ENCODE measurements at regions of chr6 and their contacts with region 1.

Region 1: GRCh38 chr6:89829591-89830385 is at the start of gene CASP8AP2:
- DNase-seq: peak; percentile 98
- ATAC-seq: peak; percentile 93
- H3K4me3 ChIP-seq: peak within 1 kb of the TSS; percentile 75 to 97 (median 79)
- H3K4me3 Mint-ChIP-seq: peak within 1 kb of the TSS; percentile 99
- H3K27ac ChIP-seq: peak within 1 kb of the TSS; percentile 62 to 83
- H3K27ac Mint-ChIP-seq: peak within 1 kb of the TSS; percentile 95
- H3K4me1 ChIP-seq: peaks cover 14 to 28% of the 10 kb centered on the region in 2 donors
- H3K4me1 Mint-ChIP-seq: peaks cover 29% of the 10 kb centered on the region
- H3K27me3 ChIP-seq: no peaks in the 10 kb centered on the region
- H3K27me3 Mint-ChIP-seq: no peaks in the 10 kb centered on the region
- CTCF ChIP-seq: no peak
- total RNA-seq, gene CASP8AP2: 30.6 and 32.1 TPM in 2 replicates

Region 2: GRCh38 chr6:89080542-89081422 is 749.0 kb before region 1 on chr6 and contains the start of gene PNRC1:
- CTCF ChIA-PET with region 1: no interaction called
- POLR2A ChIA-PET with region 1: no interaction called
- intact Hi-C with region 1: loop called (anchors 2 kb)
- DNase-seq: peak; percentile 100
- ATAC-seq: peak; percentile 76
- H3K4me3 ChIP-seq: peak within 1 kb of the TSS; percentile 81 to 100 (median 98)
- H3K4me3 Mint-ChIP-seq: peak within 1 kb of the TSS; percentile 99
- H3K27ac ChIP-seq: peak within 1 kb of the TSS; percentile 99
- H3K27ac Mint-ChIP-seq: peak within 1 kb of the TSS; percentile 98
- H3K4me1 ChIP-seq: peaks cover 25 to 29% of the 10 kb centered on the region in 2 donors
- H3K4me1 Mint-ChIP-seq: peaks cover 38% of the 10 kb centered on the region
- H3K27me3 ChIP-seq: no peaks in the 10 kb centered on the region
- H3K27me3 Mint-ChIP-seq: no peaks in the 10 kb centered on the region
- CTCF ChIP-seq: no peak
- total RNA-seq, gene PNRC1: 460 and 486 TPM in 2 replicates

Region 3: DNA sequence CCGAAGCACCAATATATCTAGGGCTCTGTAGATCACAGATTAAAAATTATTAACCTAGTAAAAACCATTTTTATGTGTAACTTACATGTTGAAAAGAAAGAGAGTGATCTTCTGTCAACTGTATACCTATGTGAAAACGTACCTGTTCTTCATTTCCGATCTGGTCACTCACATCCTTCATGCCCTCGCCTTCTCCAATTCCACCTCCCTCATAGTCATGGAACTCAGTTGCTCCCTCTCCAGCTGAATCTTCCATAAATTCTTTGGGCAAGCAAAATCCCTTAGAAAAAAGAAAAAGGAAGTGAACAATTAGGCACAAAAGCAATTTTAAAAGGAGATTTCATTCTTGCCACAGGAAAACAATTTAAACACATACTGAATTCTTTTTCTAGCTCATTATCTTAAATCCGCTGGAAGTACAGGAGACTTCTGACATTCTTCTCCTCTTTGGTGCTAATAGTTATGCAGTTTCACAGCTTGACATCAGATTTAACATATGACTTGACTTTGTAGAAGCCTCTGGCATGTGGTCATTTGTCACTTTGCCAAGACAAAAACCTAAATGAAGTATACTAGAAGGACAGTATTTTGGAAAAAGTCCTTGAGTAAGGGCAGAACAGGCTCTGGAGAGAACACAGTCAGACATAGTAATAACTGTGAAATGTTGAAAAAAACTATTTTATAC is 161.8 kb before region 1 on chr6:
- CTCF ChIA-PET with region 1: no interaction called
- POLR2A ChIA-PET with region 1: no interaction called
- intact Hi-C with region 1: no loop called
- DNase-seq: no peak
- ATAC-seq: no peak
- H3K4me3 ChIP-seq: no peak overlapping the region
- H3K4me3 Mint-ChIP-seq: no peak overlapping the region
- H3K27ac ChIP-seq: no peak overlapping the region
- H3K27ac Mint-ChIP-seq: no peak overlapping the region
- H3K4me1 ChIP-seq: no peaks in the 10 kb centered on the region
- H3K4me1 Mint-ChIP-seq: no peaks in the 10 kb centered on the region
- H3K27me3 ChIP-seq: no peaks in the 10 kb centered on the region
- H3K27me3 Mint-ChIP-seq: no peaks in the 10 kb centered on the region
- CTCF ChIP-seq: no peak

Region 4: DNA sequence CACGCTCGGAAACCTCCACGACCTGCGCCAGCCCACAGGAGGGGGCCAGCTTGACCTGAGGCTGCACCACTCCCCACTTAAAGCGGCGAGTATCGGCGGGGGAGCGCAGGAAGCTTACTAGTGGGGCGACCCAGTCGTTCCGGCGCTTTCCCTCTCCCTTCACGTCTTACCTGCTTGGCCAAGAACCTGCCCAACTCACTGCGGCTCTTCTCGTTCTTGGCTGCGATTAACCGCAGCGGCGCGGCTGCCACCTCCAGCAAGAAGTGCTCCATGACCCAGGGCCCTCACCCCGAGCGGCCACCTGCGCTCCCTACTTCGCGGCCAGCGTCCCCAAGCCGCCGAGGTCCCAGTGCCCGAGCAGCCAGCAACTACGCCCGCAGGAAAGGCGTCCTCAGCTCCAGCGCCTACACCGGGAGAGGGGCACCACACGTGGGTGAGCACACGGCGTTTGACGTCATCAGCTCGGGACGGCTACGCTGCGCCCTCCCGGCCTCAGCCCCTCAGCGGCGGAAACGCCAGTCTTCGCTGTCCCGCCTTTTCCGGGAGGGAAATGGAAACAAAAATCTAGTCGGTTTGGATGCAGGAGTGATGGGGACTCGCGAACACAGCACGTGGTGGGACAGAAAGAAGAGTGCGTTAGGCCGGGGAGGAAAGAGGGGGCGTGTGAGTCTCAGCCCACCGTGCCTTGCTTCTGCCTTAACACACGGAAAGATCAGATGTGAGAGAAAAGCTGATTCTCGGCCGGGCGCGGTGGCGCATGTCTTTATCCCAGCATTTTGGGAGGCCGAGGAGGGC is 10.3 kb before region 1 on chr6 and contains the start of gene MDN1:
- CTCF ChIA-PET with region 1: interaction called, 22 read pairs
- POLR2A ChIA-PET with region 1: interaction called, 34 read pairs
- intact Hi-C with region 1: loop called (anchors 1 kb)
- DNase-seq: peak; percentile 93
- ATAC-seq: peak; percentile 91
- H3K4me3 ChIP-seq: peak within 1 kb of the TSS; percentile 41 to 99 (median 89)
- H3K4me3 Mint-ChIP-seq: peak within 1 kb of the TSS; percentile 98
- H3K27ac ChIP-seq: peak within 1 kb of the TSS; percentile 80 to 85
- H3K27ac Mint-ChIP-seq: peak within 1 kb of the TSS; percentile 96
- H3K4me1 ChIP-seq: peaks cover 24 to 32% of the 10 kb centered on the region in 2 donors
- H3K4me1 Mint-ChIP-seq: peaks cover 29% of the 10 kb centered on the region
- H3K27me3 ChIP-seq: no peaks in the 10 kb centered on the region
- H3K27me3 Mint-ChIP-seq: no peaks in the 10 kb centered on the region
- CTCF ChIP-seq: no peak
- total RNA-seq, gene MDN1: 59.5 and 66.6 TPM in 2 replicates

Region 5: GRCh38 chr6:90080876-90081481 is 251.2 kb after region 1 on chr6:
- CTCF ChIA-PET with region 1: no interaction called
- POLR2A ChIA-PET with region 1: no interaction called
- intact Hi-C with region 1: loop called (anchors 5 kb)
- DNase-seq: peak; percentile 54
- ATAC-seq: peak; percentile 48
- H3K4me3 ChIP-seq: peak overlapping the region in 4 of 5 experiments; percentile 11 to 48 (median 40)
- H3K4me3 Mint-ChIP-seq: peak overlapping the region; percentile 90
- H3K27ac ChIP-seq: peak overlapping the region; percentile 4 to 52
- H3K27ac Mint-ChIP-seq: peak overlapping the region; percentile 90
- H3K4me1 ChIP-seq: peaks cover 61 to 72% of the 10 kb centered on the region in 2 donors
- H3K4me1 Mint-ChIP-seq: peaks cover 92% of the 10 kb centered on the region
- H3K27me3 ChIP-seq: no peaks in the 10 kb centered on the region
- H3K27me3 Mint-ChIP-seq: no peaks in the 10 kb centered on the region
- CTCF ChIP-seq: no peak

Region 6: GRCh38 chr6:90296346-90297114 is 466.7 kb after region 1 on chr6 and contains the start of gene BACH2:
- CTCF ChIA-PET with region 1: no interaction called
- POLR2A ChIA-PET with region 1: no interaction called
- intact Hi-C with region 1: loop called (anchors 10 kb)
- DNase-seq: peak; percentile 97
- ATAC-seq: peak; percentile 76
- H3K4me3 ChIP-seq: peak within 1 kb of the TSS; percentile 61 to 95 (median 79)
- H3K4me3 Mint-ChIP-seq: peak within 1 kb of the TSS; percentile 89
- H3K27ac ChIP-seq: peak within 1 kb of the TSS; percentile 94
- H3K27ac Mint-ChIP-seq: peak within 1 kb of the TSS; percentile 96
- H3K4me1 ChIP-seq: peaks cover 47 to 51% of the 10 kb centered on the region in 2 donors
- H3K4me1 Mint-ChIP-seq: peaks cover 50% of the 10 kb centered on the region
- H3K27me3 ChIP-seq: no peaks in the 10 kb centered on the region
- H3K27me3 Mint-ChIP-seq: no peaks in the 10 kb centered on the region
- CTCF ChIP-seq: no peak
- total RNA-seq, gene BACH2: 235 and 254 TPM in 2 replicates

Region 7: DNA sequence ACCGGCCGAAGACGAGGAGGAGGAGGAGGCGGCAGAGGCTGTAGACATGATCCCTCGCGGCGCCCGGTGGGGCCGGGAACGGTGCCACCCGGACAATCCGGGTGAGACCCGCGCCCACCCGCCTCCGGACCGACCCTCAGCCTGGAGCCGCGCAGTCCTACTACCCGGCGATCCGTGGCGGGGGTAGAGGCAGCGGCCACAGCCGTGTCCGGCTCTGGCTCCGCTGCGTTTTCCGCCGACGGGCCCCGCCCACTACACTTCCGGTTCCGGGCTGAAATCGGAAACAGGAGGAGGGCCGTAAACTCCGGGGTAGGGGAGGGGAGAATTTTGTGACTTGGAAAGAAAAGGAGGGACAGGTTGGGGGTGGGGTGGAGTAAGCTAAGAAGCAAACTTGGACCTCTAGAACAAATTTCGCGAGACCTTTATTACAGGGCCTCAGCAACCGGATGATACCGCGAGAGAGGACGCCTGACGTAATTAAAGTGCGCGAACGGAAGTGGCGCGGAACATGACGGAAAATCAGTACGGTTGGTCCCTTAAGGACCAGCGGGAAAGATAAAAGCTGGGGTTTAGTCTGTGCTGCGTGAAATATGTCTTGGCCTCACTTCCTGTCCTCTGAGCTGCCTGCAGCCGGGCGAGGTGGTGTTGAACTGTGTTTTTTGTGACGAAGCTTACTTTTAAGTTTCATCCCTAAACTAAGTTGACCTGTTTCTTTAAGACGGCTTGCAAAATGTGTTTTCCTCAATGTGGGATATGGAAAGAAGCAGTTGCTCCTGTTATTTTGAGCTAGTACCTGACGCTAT is 757.2 kb after region 1 on chr6 and contains the start of gene MAP3K7:
- CTCF ChIA-PET with region 1: no interaction called
- POLR2A ChIA-PET with region 1: no interaction called
- intact Hi-C with region 1: loop called (anchors 2 kb)
- DNase-seq: peak; percentile 97
- ATAC-seq: peak; percentile 85
- H3K4me3 ChIP-seq: peak within 1 kb of the TSS; percentile 91 to 98 (median 96)
- H3K4me3 Mint-ChIP-seq: peak within 1 kb of the TSS; percentile 98
- H3K27ac ChIP-seq: peak within 1 kb of the TSS; percentile 90 to 100
- H3K27ac Mint-ChIP-seq: peak within 1 kb of the TSS; percentile 100
- H3K4me1 ChIP-seq: peaks cover 15 to 30% of the 10 kb centered on the region in 2 donors
- H3K4me1 Mint-ChIP-seq: peaks cover 41% of the 10 kb centered on the region
- H3K27me3 ChIP-seq: peaks cover 0 to 6% (median 2%) of the 10 kb centered on the region in 4 experiments
- H3K27me3 Mint-ChIP-seq: peaks cover 12% of the 10 kb centered on the region
- CTCF ChIP-seq: no peak
- total RNA-seq, gene MAP3K7: 32.8 and 34.4 TPM in 2 replicates